ENCODE measurements at regions of chr17 and their contacts with region 1.

Region 1: GRCh38 chr17:42566883-42567573 is at the start of gene MLX:
- H3K4me3 ChIP-seq: peak within 1 kb of the TSS; percentile 86
- H3K27ac ChIP-seq: peak within 1 kb of the TSS; percentile 86
- H3K4me1 ChIP-seq: peaks cover 10% of the 10 kb centered on the region; the same call in 1 of the 2 replicates
- CTCF ChIP-seq: peak; percentile 86

Region 2: DNA sequence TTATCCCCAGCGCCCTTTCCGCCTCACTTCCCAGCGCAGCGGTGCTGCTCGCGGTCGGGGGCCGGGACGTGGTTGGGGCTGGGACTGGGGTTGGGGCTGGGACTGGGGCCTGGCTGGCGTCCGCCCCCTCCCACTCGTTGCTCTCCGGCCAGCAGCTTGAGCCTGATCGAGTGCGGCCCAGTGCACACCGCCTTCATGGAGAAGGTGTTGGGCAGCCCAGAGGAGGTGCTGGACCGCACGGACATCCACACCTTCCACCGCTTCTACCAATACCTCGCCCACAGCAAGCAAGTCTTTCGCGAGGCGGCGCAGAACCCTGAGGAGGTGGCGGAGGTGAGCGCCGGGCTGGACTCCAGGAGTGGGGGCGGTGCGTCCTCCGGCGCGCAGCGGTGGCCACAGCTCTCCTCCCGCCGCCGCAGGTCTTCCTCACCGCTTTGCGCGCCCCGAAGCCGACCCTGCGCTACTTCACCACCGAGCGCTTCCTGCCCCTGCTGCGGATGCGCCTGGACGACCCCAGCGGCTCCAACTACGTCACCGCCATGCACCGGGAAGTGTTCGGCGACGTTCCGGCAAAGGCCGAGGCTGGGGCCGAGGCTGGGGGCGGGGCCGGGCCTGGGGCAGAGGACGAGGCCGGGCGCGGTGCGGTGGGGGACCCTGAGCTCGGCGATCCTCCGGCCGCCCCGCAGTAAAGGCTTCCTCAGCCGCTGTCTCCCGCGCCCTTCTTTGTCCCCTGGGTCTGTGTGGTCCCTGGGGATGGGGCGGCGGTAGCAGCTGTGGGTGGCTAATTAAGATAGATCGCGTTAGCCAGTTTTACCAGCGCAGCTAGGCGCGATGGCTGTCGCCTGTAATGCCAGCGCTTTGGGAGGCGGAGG is 12.5 kb before region 1 on chr17:
- CTCF ChIA-PET with region 1: interaction called, 4 read pairs
- POLR2A ChIA-PET with region 1: interaction called, 10 read pairs
- H3K4me3 ChIP-seq: peak overlapping the region; percentile 68
- H3K27ac ChIP-seq: peak overlapping the region; percentile 95
- H3K4me1 ChIP-seq: peaks cover 5% of the 10 kb centered on the region; the same call in 1 of the 2 replicates
- CTCF ChIP-seq: peak; percentile 73

Region 3: GRCh38 chr17:42744283-42744805 is 177.3 kb after region 1 on chr17:
- CTCF ChIA-PET with region 1: no interaction called
- POLR2A ChIA-PET with region 1: no interaction called
- H3K4me3 ChIP-seq: peak overlapping the region; percentile 73
- H3K27ac ChIP-seq: peak overlapping the region; percentile 79
- H3K4me1 ChIP-seq: peaks cover 9% of the 10 kb centered on the region
- CTCF ChIP-seq: no peak; the same call in none of the 2 replicates

Region 4: DNA sequence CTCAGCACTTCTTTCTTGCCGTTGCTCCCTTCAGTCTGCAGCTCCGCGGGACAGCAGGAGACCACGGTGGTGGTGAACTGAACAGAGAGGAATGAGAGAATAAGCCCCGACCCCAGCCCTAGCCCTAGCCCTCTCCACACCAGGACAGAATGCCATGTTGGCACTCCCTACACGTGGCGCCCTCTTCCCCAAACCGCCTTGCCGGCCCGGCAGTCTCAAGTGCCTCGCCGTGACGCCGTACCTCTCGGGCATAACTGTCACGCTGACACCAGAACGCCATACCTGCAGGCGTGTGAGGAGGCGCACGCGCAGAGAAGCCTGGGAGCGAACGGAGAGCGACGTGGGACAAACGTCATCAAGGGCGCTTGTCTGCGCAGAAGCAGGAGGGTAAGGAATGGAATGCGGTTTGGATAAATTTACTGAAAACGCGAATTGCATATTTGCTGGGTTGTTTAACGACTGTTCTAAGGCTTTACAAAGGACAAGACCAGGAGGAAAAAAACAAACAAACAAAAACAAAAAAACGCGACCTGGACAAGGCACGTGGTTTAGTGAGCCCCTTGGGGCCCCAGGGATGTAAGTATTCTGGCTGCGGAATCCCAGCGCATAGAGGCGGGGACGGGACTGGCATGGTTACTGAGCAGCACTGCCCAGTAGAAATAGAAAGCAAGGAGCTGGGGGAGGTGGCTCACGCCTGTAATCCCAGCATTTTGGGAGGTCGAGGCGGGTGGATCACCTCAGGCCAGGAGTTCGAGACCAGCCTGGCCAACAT is 397.3 kb after region 1 on chr17 and contains the start of gene AARSD1:
- CTCF ChIA-PET with region 1: no interaction called
- POLR2A ChIA-PET with region 1: interaction called, 16 read pairs
- H3K4me3 ChIP-seq: peak within 1 kb of the TSS; percentile 76
- H3K27ac ChIP-seq: peak within 1 kb of the TSS; percentile 60; the same call in 1 of the 2 replicates
- H3K4me1 ChIP-seq: no peaks in the 10 kb centered on the region
- CTCF ChIP-seq: no peak